ENCODE measurements at regions of chr17 and their contacts with region 1.

Region 1: GRCh38 chr17:76540381-76541300 is 797 bp downstream of the PRCD start:
- DNase-seq: no peak
- ATAC-seq: peak; percentile 92
- H3K4me3 ChIP-seq: peak overlapping the region; percentile 28 to 45
- H3K27ac ChIP-seq: peak overlapping the region; percentile 64
- H3K4me1 ChIP-seq: peaks cover 19% of the 10 kb centered on the region
- H3K27me3 ChIP-seq: no peaks in the 10 kb centered on the region; the same call in 1 of the 2 replicates
- CTCF ChIP-seq: no peak

Region 2: DNA sequence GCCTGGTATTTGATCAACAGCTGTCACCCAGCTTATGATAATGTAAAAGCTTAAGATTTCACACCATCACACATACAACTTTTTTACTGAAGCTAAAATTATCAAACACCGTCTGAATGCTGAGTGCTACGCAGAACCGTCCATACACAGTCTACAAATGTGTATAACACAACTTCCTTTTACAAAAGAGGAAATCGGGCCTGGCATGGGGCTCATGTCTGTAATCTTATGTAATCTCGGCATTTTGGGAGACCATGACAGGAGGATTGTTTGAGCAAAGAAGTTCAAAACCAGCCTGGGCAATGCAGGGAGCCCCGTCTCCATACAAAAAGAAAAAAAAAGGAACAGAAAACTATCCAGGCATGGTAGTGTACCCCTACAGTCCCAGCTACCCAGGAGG is 212.9 kb before region 1 on chr17:
- CTCF ChIA-PET with region 1: no interaction called
- POLR2A ChIA-PET with region 1: interaction called, 11 read pairs
- in situ Hi-C with region 1: no loop called
- intact Hi-C with region 1: no loop called
- DNase-seq: no peak
- ATAC-seq: no peak
- H3K4me3 ChIP-seq: no peak overlapping the region
- H3K27ac ChIP-seq: no peak overlapping the region
- H3K4me1 ChIP-seq: no peaks in the 10 kb centered on the region
- H3K27me3 ChIP-seq: no peaks in the 10 kb centered on the region
- CTCF ChIP-seq: no peak

Region 3: DNA sequence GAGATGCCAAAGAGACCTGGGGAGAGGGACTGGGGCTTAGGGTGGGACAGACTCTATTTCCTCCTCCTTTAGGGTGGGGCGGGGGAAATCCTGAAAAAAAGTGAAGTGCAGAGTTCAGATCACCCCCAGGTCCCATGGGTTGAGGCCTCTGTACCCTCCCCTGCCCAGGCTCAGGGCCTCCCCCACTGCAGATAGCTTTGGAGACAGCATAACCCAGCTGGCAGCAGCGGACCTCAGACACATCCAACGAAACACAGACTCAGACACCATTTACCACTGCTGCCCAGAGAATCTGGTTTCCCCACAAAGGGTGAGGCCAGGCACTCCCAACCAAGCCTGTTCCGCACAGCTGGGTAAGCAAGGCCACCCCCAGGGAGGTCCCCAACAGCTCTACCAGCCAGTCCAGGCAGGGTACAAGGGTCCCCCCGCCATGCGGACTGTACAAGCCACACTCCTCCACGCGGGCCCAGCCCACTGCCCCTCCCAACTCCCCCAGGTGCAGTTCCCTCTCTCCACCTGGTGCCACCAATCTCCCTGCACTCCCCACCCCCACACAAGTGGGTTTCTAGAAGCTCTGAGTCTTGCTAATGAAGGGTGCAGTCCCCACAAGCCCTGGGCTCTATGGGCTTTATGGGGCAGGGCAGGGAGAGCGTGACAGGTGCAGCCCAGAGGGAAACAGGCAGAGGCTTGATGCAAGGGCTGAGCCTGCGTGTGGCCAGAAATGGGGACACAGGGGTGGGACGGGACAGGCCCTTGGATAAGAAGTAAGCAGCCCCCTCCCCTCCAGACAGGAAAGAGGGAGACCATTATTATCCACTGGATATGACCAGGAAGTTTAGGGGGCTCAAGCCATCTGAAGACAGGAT is 48.3 kb before region 1 on chr17:
- CTCF ChIA-PET with region 1: no interaction called
- POLR2A ChIA-PET with region 1: no interaction called
- in situ Hi-C with region 1: no loop called
- intact Hi-C with region 1: no loop called
- DNase-seq: no peak
- ATAC-seq: peak; percentile 17
- H3K4me3 ChIP-seq: peak overlapping the region in 1 of 2 experiments; percentile 20; a peak in 1 of 4 replicates
- H3K27ac ChIP-seq: peak overlapping the region; percentile 59
- H3K4me1 ChIP-seq: peaks cover 51% of the 10 kb centered on the region
- H3K27me3 ChIP-seq: no peaks in the 10 kb centered on the region
- CTCF ChIP-seq: no peak

Region 4: DNA sequence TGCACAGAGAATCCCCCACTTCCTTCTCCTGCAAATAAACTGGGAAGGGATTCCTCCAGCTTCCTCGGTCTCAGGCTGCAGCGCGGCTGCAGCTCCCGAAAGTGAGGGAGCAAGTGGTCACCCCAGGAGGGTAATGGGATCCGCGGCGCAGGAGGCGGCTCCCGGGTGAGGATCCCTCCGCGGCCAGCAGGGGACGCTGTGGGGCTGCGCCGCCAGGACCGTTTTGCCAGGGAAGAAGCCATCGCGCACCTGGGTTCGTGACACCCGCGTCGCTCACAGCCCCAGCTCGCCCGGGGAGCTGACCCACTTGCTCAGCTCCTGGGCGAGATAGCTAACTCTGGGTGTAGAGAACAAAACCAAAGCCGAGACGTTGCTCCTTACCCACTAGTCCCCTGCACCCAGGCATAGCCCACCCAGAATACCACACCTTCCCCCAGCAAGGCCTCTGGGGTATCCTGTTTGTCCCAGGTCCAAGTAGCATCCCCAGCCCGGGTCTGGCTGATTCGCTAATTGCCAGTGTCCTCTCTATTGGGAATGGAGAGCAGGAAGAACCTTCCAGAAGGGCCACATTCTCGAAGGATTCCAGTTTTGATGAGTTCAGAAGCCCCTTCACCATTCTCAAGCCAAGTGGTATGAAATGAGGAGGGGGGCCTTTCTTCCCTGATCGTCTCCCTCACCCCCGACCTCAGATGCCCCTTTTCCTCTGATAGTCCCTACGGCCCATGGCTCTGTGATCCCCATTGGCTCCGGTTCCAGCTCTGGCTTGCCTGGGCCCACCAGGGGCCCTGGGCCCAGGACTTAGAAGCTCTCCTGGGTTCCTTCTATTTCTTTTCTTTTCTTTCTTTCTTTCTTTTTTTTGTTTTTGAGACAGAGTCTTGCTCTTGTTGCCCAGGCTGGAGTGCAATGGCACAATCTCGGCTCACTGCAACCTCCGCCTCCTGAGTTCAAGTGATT is 17.3 kb before region 1 on chr17:
- CTCF ChIA-PET with region 1: interaction called, 11 read pairs
- POLR2A ChIA-PET with region 1: interaction called, 4 read pairs
- in situ Hi-C with region 1: no loop called
- intact Hi-C with region 1: no loop called
- DNase-seq: peak; percentile 46
- ATAC-seq: peak; percentile 85
- H3K4me3 ChIP-seq: peak overlapping the region in 1 of 2 experiments; percentile 17; a peak in 1 of 4 replicates
- H3K27ac ChIP-seq: no peak overlapping the region
- H3K4me1 ChIP-seq: peaks cover 19% of the 10 kb centered on the region
- H3K27me3 ChIP-seq: no peaks in the 10 kb centered on the region
- CTCF ChIP-seq: peak; percentile 100

Region 5: DNA sequence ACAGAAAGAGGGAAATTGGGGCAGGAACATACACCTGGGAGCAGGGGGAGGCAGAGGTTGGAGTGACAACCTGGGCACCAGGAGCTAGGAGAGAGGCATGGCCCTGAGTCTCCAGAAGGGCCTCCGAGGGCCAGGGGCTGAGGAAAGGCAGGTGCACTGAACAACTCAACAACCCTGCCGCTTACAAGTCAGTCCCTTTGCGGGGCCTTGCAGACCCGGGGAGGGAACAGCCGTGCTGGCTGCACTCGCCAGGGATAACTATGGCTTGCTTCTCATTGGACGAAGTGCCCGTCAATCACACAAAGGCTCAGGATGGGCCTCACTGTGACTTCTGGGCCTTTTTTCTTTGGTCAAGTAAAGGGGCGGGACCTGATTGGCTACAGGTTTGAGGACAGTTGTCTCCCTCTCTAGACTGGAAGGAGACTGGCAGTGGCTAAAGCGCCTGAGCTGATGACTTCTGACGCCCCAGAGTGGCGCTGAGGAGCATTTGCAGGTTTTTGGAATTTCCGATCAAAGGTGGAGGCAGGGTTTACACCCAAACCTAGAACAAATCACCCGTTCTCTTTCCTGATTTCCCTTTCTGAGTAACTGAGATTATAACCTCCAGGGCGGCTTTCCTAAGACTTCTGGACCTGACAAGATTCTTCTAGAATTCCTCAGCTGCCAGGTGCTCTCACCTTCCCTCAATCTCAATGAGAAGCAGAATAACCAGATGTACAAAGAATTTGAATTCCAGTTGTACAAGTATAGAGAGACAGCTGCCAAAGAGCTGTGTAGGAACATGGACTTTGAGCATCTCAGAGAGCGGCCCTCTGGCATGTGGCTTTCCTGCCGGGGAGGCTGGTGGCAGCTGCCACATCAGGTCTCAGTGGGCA is 72.6 kb after region 1 on chr17:
- CTCF ChIA-PET with region 1: interaction called, 10 read pairs
- POLR2A ChIA-PET with region 1: no interaction called
- in situ Hi-C with region 1: no loop called
- intact Hi-C with region 1: no loop called
- DNase-seq: no peak
- ATAC-seq: peak; percentile 36; the same call in 1 of the 2 replicates
- H3K4me3 ChIP-seq: no peak overlapping the region
- H3K27ac ChIP-seq: no peak overlapping the region
- H3K4me1 ChIP-seq: no peaks in the 10 kb centered on the region
- H3K27me3 ChIP-seq: no peaks in the 10 kb centered on the region
- CTCF ChIP-seq: no peak; the same call in 1 of the 2 replicates

Measured in Panc1 (cell line).